IMR-90 (cell line): ENCODE measurements at regions of chr14 and their contacts with region 1.

Region 1: GRCh38 chr14:92783816-92784431 is 10.2 kb upstream of the GOLGA5 start:
- DNase-seq: peak; percentile 75
- ATAC-seq: peak; percentile 70
- H3K4me3 ChIP-seq: no peak overlapping the region
- H3K27ac ChIP-seq: no peak overlapping the region
- H3K4me1 ChIP-seq: peaks cover 10% of the 10 kb centered on the region
- H3K27me3 ChIP-seq: no peaks in the 10 kb centered on the region
- CTCF ChIP-seq: peak; percentile 76
- POLR2A ChIP-seq: no peak
- RAD21 ChIP-seq: peak; percentile 75

Region 2: DNA sequence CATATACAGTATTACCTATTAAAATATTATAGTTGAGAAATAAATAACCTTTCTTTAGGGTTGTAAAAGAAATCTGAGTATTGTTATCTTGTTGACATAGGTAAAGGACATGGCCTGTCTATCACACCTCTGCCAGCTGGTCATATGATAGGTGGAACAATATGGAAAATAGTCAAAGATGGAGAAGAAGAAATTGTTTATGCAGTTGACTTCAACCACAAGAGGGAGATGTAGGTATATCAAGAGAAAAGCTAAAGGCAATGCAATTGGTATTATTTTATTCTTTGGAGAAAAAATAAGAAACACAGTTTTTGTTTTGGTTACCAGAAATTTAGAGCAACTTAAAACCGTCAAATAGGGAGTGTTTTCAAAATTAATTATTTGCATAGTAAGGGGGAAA is 648.7 kb before region 1 on chr14:
- CTCF ChIA-PET with region 1: no interaction called
- POLR2A ChIA-PET with region 1: no interaction called
- dilution Hi-C with region 1: no loop called
- in situ Hi-C with region 1: no loop called
- intact Hi-C with region 1: loop called (anchors 10 kb)
- DNase-seq: peak; percentile 59
- ATAC-seq: peak; percentile 54; the same call in 1 of the 2 replicates
- H3K4me3 ChIP-seq: no peak overlapping the region
- H3K27ac ChIP-seq: no peak overlapping the region
- H3K4me1 ChIP-seq: no peaks in the 10 kb centered on the region
- H3K27me3 ChIP-seq: no peaks in the 10 kb centered on the region
- CTCF ChIP-seq: peak; percentile 70
- POLR2A ChIP-seq: no peak
- RAD21 ChIP-seq: peak; percentile 72

Region 3: DNA sequence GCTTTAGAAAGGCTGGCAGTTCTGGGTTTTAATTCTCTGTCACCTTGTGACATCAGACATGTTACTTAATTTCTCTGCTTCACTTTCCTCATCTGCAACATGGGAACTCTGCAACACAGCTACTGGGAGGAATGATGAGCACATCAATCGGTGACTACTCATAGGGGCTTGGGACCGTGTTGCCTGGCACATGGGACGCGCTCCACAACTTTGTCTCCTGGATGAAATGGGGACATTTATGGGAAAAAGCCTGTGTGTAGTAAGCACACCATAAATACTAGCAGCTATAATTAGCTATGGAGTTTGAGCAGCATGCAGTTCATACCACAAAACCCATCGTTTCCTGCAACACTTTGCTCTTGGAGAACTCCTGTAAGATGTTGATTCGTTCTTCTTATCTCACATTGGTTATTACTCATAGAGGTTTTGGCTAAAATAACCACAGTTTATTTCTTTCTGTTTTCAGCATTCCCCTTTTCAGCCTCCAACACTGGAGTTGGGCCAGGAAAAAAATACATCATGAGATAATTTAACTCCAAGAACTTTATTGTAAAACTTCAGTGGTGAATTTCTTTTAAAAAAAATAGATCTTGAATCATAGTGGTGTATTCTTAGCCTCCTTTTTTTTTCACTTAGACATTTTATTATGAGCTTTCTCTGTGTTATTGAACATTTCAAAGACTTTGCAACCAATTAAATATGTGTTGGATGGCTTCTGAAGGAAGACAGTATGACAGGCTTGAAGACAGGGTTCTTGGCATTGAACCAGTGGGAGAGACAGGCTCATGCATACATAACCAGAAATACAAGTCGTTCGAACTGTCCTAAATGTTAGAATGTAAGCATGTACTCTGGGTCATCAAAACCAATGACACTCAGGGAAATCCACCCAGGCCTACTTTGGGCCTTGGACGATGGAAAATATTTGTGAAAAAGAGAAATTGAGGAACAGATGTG is 197.7 kb before region 1 on chr14:
- CTCF ChIA-PET with region 1: no interaction called
- POLR2A ChIA-PET with region 1: no interaction called
- dilution Hi-C with region 1: no loop called
- in situ Hi-C with region 1: no loop called
- intact Hi-C with region 1: loop called (anchors 5 kb)
- DNase-seq: peak; percentile 99
- ATAC-seq: peak; percentile 95
- H3K4me3 ChIP-seq: no peak overlapping the region
- H3K27ac ChIP-seq: peak overlapping the region; percentile 65
- H3K4me1 ChIP-seq: peaks cover 29% of the 10 kb centered on the region
- H3K27me3 ChIP-seq: no peaks in the 10 kb centered on the region
- CTCF ChIP-seq: no peak
- POLR2A ChIP-seq: no peak
- RAD21 ChIP-seq: peak; percentile 1; the same call in 1 of the 2 replicates

Region 4: GRCh38 chr14:92686900-92687444 is 97.0 kb before region 1 on chr14:
- CTCF ChIA-PET with region 1: interaction called, 9 read pairs
- POLR2A ChIA-PET with region 1: interaction called, 3 read pairs
- dilution Hi-C with region 1: no loop called
- in situ Hi-C with region 1: no loop called
- intact Hi-C with region 1: loop called (anchors 1 kb)
- DNase-seq: peak; percentile 43
- ATAC-seq: peak; percentile 99
- H3K4me3 ChIP-seq: no peak overlapping the region
- H3K27ac ChIP-seq: no peak overlapping the region
- H3K4me1 ChIP-seq: 0 out of 2 replicates have a peak, but pooled peaks cover 2% of the 10 kb centered on the region
- H3K27me3 ChIP-seq: no peaks in the 10 kb centered on the region
- CTCF ChIP-seq: peak; percentile 96
- POLR2A ChIP-seq: no peak
- RAD21 ChIP-seq: peak; percentile 85

Region 5: GRCh38 chr14:92717571-92718042 is 66.3 kb before region 1 on chr14:
- CTCF ChIA-PET with region 1: interaction called, 3 read pairs
- POLR2A ChIA-PET with region 1: no interaction called
- dilution Hi-C with region 1: no loop called
- in situ Hi-C with region 1: loop called (anchors 5 kb)
- intact Hi-C with region 1: loop called (anchors 1 kb)
- DNase-seq: no peak
- ATAC-seq: no peak
- H3K4me3 ChIP-seq: no peak overlapping the region
- H3K27ac ChIP-seq: no peak overlapping the region
- H3K4me1 ChIP-seq: peaks cover 6% of the 10 kb centered on the region
- H3K27me3 ChIP-seq: no peaks in the 10 kb centered on the region
- CTCF ChIP-seq: no peak
- POLR2A ChIP-seq: no peak
- RAD21 ChIP-seq: no peak